Head of caudate nucleus (tissue), 42 donors: ENCODE measurements at regions of chr1 and their contacts with region 1.

Region 1: DNA sequence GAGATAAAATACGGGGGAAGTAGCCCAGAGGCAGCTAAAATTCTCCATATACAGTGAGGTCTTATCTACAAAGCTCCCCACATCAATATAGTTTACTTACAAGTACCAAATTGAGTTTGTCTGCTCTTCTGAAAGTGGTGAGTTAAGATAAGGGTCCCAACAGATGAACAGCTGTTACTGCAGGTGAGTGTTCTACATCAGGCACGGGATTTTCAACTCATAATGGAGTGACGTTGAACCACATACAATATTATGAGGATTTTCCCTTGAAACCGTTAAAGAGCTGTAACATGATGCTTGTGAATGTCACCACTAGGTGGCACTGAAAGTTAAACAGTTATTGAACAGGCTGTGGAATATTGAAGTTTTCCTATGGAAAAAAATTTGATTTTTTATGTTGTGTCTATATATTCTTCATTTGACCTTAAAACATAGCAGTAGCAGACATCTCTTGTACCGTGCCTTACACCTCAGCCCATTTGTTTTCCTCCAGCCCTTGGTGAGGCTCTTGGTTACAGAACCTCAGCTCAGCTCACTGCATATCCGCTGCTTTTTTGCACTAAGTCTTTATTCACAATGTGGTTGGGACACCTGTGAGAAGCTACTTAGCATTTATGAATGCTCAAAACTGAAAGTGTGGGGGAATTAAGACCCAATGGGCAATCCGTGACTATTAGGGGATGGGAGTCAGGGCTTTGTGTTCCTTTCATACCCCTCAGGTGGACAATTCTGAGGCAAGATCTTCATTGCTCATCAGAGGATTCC is 23.2 kb downstream of the CD1D start:
- DNase-seq: peak in 18 of 42 donors; percentile 11 to 81 (median 55)

Region 2: DNA sequence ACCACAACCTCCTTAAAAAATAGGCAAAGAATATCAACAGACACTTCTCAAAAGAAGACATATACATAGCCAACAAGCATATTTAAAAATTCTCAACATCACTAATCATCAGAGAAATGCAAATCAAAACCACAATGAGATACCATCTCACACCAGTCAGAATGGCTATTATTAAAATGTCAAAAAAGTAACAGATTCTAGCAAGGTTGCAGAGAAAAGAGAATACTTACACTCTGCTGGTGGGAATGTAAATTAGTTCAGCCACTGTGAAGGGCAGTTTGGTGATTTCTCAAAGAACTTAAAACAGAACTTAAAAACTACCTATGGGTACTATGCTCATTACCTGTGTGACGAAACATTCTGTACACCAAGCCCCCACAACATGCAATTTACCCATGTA is 106.7 kb after region 1 on chr1:
- intact Hi-C with region 1: no loop called
- DNase-seq: no peak

Region 3: DNA sequence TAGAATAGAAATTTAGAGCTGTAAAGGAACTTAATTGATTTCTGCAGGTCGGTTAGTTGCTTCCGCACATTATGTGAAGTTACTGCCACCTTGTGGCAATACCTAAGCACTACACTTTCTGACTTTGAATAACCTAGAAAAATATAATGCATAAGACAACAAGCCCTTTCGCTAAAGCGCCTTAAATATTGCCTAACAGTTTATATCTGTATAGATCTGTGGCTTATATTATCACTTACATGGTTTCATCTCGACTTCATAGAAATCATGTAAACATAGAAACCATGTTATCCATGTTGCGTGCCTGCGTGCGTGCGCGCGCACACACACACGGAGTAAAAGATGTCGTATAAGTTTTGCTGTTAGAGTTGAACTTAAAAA is 794.9 kb after region 1 on chr1:
- intact Hi-C with region 1: loop called (anchors 5 kb)
- DNase-seq: peak in 40 of 42 donors; percentile 29 to 85 (median 58)

Region 4: GRCh38 chr1:159071970-159072582 is 868.2 kb after region 1 on chr1:
- intact Hi-C with region 1: loop called (anchors 10 kb)
- DNase-seq: peak in 5 of 42 donors; percentile 4 to 61 (median 22)